PC-9 (cell line): ENCODE measurements at regions of chr9 and their contacts with region 1.

Region 1: GRCh38 chr9:115672477-115673316 is 480.9 kb upstream of the PAPPA start:
- DNase-seq: peak; percentile 69 to 87
- H3K4me3 ChIP-seq: no peak overlapping the region; the same call in 1 of the 2 replicates
- H3K27ac ChIP-seq: peak overlapping the region; percentile 100
- H3K4me1 ChIP-seq: peaks cover 46% of the 10 kb centered on the region
- H3K27me3 ChIP-seq: no peaks in the 10 kb centered on the region
- CTCF ChIP-seq: no peak

Region 2: DNA sequence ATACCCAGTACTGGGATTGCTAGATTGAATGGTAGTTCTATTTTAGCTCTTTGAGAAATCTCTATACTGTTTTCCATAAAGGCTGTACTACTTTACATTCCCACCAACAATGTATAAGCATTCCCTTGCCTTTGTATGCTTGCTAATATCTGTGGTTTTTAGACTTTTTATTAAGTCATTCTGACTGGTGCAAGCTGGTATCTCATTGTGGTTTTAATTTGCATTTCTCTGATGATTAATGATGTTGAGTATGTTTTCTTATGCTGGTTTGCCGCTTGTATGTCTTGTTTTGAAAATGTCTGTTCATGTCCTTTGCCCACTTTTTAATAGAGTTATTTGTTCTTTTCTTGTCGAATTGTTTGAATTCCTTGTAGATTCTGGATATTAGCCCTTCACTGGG is 31.8 kb before region 1 on chr9:
- CTCF ChIA-PET with region 1: no interaction called
- POLR2A ChIA-PET with region 1: interaction called, 3 read pairs
- intact Hi-C with region 1: loop called (anchors 2 kb)
- DNase-seq: peak in 1 of 2 experiments; percentile 72
- H3K4me3 ChIP-seq: no peak overlapping the region
- H3K27ac ChIP-seq: peak overlapping the region; percentile 49
- H3K4me1 ChIP-seq: peaks cover 11% of the 10 kb centered on the region; the same call in 1 of the 2 replicates
- H3K27me3 ChIP-seq: no peaks in the 10 kb centered on the region
- CTCF ChIP-seq: no peak

Region 3: GRCh38 chr9:115694014-115694413 is 21.3 kb after region 1 on chr9:
- CTCF ChIA-PET with region 1: no interaction called
- POLR2A ChIA-PET with region 1: no interaction called
- intact Hi-C with region 1: no loop called
- DNase-seq: peak in 1 of 2 experiments; percentile 45
- H3K4me3 ChIP-seq: no peak overlapping the region
- H3K27ac ChIP-seq: no peak overlapping the region
- H3K4me1 ChIP-seq: peaks cover 20% of the 10 kb centered on the region
- H3K27me3 ChIP-seq: no peaks in the 10 kb centered on the region
- CTCF ChIP-seq: no peak; the same call in 1 of the 2 replicates

Region 4: DNA sequence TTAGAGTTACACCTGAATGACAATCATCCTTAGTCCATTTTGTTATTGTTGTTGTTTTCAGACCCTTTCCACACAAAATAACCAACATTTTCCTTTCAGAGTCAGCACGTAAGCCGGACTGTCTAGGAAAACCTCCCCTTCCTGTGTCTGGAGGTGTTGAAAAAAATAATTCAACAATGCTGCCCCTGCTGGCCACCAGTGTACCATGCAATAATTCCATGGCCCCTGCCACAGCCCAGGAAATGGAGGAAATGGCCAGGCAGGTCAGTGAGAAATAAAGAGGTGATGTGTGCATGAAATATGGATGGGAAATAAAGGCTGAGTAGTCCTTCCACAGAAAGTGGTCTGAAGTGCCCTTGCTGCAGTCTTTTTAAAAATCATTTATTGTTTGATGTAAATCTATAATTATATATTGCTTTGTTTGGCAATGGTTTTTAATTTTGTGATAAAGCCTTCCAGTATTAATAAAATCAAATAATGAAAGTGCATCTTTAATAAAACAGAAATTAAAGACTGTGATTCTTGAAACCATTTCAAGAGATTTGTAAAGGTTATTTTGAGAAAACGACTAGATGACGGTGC is 328.1 kb after region 1 on chr9:
- CTCF ChIA-PET with region 1: no interaction called
- POLR2A ChIA-PET with region 1: no interaction called
- intact Hi-C with region 1: loop called (anchors 2 kb)
- DNase-seq: no peak
- H3K4me3 ChIP-seq: no peak overlapping the region
- H3K27ac ChIP-seq: no peak overlapping the region
- H3K4me1 ChIP-seq: peaks cover 69% of the 10 kb centered on the region
- H3K27me3 ChIP-seq: no peaks in the 10 kb centered on the region
- CTCF ChIP-seq: peak; percentile 53; the same call in 1 of the 2 replicates

Region 5: GRCh38 chr9:116156621-116157314 is 484.1 kb after region 1 on chr9:
- CTCF ChIA-PET with region 1: no interaction called
- POLR2A ChIA-PET with region 1: no interaction called
- intact Hi-C with region 1: loop called (anchors 2 kb)
- DNase-seq: peak; percentile 70 to 73
- H3K4me3 ChIP-seq: peak overlapping the region; percentile 48
- H3K27ac ChIP-seq: peak overlapping the region; percentile 56
- H3K4me1 ChIP-seq: peaks cover 38% of the 10 kb centered on the region
- H3K27me3 ChIP-seq: no peaks in the 10 kb centered on the region
- CTCF ChIP-seq: no peak